ENCODE measurements at regions of chr5 and their contacts with region 1.

Region 1: GRCh38 chr5:122704243-122705036 is 70.4 kb upstream of the SNX2 start:
- DNase-seq: no peak
- H3K4me3 ChIP-seq: no peak overlapping the region
- H3K27ac ChIP-seq: no peak overlapping the region
- H3K4me1 ChIP-seq: no peaks in the 10 kb centered on the region
- H3K27me3 ChIP-seq: no peaks in the 10 kb centered on the region
- CTCF ChIP-seq: peak; percentile 32 to 58 (median 54)

Region 2: DNA sequence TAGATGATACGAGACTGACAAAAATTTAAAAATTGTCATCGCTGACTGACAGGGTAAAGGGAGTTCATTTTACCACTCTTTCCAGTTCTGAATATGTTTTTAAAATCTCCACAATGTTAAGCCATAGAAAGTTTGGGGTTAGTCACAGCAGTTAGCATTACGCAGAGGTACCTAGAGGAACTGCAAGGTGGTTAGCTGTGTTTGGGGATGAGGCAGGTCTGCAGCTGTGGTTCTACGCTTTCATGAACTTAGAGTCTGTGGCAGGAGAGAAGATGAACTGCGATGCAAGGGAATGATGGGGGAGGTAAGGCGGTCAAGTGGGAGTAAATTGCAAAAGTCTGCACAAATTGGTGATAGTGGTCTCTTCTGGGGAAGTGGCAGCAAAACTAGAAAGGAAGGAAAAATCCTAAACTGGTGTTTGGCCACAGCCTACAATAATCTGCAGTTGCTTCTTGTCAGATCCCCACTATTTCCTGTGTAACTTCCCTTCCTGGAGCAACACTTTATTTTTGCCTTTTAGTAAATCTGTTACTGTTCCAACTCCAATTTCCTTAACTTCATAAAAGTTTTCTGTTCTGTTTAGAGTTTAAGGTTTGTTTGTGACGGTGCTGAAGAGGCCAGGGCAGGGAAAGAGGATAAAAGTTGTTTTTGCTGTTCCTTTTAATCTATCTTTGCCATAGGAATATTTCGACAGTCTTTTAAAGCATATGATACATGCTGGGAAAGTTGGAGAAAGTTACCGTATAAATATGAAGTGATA is 31.8 kb after region 1 on chr5:
- intact Hi-C with region 1: no loop called
- DNase-seq: no peak
- H3K4me3 ChIP-seq: no peak overlapping the region
- H3K27ac ChIP-seq: no peak overlapping the region
- H3K4me1 ChIP-seq: no peaks in the 10 kb centered on the region
- H3K27me3 ChIP-seq: no peaks in the 10 kb centered on the region
- CTCF ChIP-seq: no peak

Region 3: DNA sequence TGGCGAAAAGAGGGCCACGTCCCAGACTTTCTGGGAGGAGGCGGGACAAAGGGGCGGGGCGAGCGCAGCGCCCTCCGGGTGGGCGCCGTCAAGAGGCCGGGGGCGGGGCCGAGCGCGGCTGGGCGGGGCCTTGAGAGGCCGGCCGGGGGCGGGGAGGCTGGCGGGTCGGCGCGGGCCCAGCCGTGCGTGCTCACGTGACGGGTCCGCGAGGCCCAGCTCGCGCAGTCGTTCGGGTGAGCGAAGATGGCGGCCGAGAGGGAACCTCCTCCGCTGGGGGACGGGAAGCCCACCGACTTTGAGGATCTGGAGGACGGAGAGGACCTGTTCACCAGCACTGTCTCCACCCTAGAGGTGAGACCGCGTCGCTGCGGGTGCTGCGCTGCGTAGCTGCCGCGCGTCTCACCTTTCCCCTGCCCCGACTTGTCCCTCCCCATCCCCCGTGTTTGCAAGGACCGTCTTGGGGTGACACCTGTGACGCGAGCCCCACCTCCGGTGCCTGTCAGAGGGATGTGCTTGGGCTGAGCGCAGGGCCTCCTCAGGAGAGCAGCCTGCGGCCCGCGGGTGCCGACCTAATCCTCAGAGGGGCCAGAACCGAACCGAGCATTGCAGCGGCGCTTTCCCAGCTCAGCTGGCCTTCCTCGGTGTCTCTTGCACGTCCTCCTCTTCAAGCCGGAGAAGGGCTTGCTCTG is 70.6 kb after region 1 on chr5 and contains the start of gene SNX2:
- intact Hi-C with region 1: loop called (anchors 2 kb)
- DNase-seq: peak; percentile 71 to 97
- H3K4me3 ChIP-seq: peak within 1 kb of the TSS; percentile 77 to 99
- H3K27ac ChIP-seq: peak within 1 kb of the TSS; percentile 79 to 94
- H3K4me1 ChIP-seq: peaks cover 0 to 15% of the 10 kb centered on the region in 2 donors
- H3K27me3 ChIP-seq: no peaks in the 10 kb centered on the region
- CTCF ChIP-seq: no peak
- total RNA-seq, gene SNX2: 15.6 TPM

Measured in ascending aorta (tissue), 2 donors.